PC-9 (cell line): ENCODE measurements at regions of chr17 and their contacts with region 1.

Region 1: GRCh38 chr17:46770818-46771560 is 47.5 kb downstream of the WNT3 start:
- DNase-seq: peak; percentile 53 to 68
- H3K4me3 ChIP-seq: peak overlapping the region; percentile 68
- H3K27ac ChIP-seq: peak overlapping the region; percentile 71
- H3K4me1 ChIP-seq: peaks cover 34% of the 10 kb centered on the region
- H3K27me3 ChIP-seq: no peaks in the 10 kb centered on the region
- CTCF ChIP-seq: peak; percentile 59; the same call in 1 of the 2 replicates

Region 2: GRCh38 chr17:46007461-46007965 is 763.5 kb before region 1 on chr17:
- CTCF ChIA-PET with region 1: no interaction called
- POLR2A ChIA-PET with region 1: interaction called, 10 read pairs
- intact Hi-C with region 1: no loop called
- DNase-seq: no peak
- H3K4me3 ChIP-seq: no peak overlapping the region
- H3K27ac ChIP-seq: no peak overlapping the region
- H3K4me1 ChIP-seq: no peaks in the 10 kb centered on the region
- H3K27me3 ChIP-seq: no peaks in the 10 kb centered on the region
- CTCF ChIP-seq: no peak

Region 3: DNA sequence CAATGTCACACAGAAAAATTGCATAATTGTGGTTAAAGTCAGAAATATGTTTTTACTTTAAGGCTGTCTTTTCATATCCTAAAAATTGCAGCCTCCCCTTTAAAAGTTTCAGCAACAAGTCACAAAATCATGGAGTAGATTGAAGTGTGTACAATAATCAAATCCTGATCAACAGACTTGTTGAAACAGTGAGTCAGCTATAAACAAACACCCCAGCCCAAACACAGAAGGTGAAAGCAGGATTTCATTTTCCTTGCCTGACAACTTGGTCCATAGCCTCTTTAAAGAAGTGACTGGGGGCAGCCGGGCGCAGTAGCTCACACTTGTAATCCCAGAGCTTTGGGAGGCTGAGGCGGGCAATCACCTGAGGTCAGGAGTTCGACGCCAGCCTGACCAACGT is 12.4 kb before region 1 on chr17:
- CTCF ChIA-PET with region 1: no interaction called
- POLR2A ChIA-PET with region 1: no interaction called
- intact Hi-C with region 1: loop called (anchors 2 kb)
- DNase-seq: peak in 1 of 2 experiments; percentile 92
- H3K4me3 ChIP-seq: no peak overlapping the region
- H3K27ac ChIP-seq: peak overlapping the region; percentile 65
- H3K4me1 ChIP-seq: peaks cover 43% of the 10 kb centered on the region
- H3K27me3 ChIP-seq: no peaks in the 10 kb centered on the region
- CTCF ChIP-seq: no peak

Region 4: DNA sequence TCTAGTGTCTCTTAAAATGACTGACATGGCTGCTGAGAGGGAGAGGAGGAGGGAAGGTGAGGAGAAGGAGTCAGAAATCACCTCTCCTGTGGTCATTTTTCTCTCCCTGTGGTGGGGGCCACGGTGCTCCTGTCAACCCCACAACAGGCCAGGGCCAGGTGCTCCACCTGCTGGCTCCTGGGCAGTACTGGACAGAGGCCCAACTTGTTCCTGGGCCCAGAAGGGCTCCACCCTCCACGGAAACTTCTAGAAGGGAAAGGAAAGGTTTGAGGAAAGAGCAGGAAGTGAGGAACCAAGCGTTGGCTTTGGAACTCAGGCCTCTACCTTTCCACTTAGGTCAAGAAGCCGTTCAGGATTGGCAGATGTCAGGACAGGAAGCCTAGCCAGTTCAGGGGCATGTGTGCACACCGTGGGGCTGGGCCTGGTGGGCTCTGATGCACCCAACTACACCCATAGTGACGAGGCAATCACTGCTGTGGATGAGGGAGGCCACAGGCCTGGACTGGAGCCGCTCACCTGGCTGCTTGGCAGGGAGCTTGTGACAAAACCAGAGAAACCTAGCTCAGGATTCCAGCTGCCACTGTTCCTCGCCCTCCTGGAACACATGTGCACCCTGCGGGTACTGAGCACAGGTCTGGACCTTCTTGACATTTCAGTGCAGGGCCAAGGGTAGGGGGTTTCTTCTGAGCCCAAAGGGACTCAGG is 11.4 kb after region 1 on chr17:
- CTCF ChIA-PET with region 1: no interaction called
- POLR2A ChIA-PET with region 1: no interaction called
- intact Hi-C with region 1: no loop called
- DNase-seq: peak; percentile 52 to 57
- H3K4me3 ChIP-seq: no peak overlapping the region
- H3K27ac ChIP-seq: no peak overlapping the region
- H3K4me1 ChIP-seq: peaks cover 33% of the 10 kb centered on the region
- H3K27me3 ChIP-seq: no peaks in the 10 kb centered on the region
- CTCF ChIP-seq: peak; percentile 93

Region 5: DNA sequence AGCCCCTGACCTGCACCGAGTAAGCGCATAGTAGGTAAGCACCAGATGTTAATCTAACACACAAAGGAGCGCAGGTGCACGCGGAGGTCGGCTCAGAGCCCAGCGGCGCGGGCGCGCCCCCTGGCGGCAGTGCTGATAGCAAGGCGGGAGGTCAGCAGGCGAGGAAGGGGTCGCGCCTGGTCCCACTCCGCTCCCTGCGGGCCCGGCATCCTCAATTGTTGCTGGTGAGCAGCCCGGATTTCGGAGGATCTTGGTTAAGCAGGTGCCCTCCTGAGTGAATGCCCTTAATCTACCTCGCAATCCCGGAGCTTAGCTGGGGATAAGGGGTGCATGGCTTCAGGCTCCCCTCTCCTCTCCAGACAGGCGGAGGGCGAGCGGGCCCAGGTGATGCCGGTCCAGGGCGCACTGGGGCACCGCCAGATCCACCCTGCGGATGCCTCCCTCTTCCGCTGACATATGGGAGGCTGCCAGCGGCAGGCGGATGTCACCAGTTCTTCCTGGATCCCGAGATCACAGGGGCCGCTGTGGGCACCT is 51.5 kb after region 1 on chr17:
- CTCF ChIA-PET with region 1: no interaction called
- POLR2A ChIA-PET with region 1: no interaction called
- intact Hi-C with region 1: loop called (anchors 5 kb)
- DNase-seq: no peak
- H3K4me3 ChIP-seq: no peak overlapping the region
- H3K27ac ChIP-seq: no peak overlapping the region
- H3K4me1 ChIP-seq: peaks cover 8% of the 10 kb centered on the region; the same call in 1 of the 2 replicates
- H3K27me3 ChIP-seq: peaks cover 14% of the 10 kb centered on the region; the same call in 1 of the 2 replicates
- CTCF ChIP-seq: peak; percentile 75